PC-3 (cell line): ENCODE measurements at regions of chr14 and their contacts with region 1.

Region 1: GRCh38 chr14:88613552-88614010 is 50.7 kb downstream of the ZC3H14 start:
- DNase-seq: peak; percentile 89
- ATAC-seq: peak; percentile 83
- H3K4me3 ChIP-seq: no peak overlapping the region
- H3K27ac ChIP-seq: peak overlapping the region; percentile 65
- H3K4me1 ChIP-seq: peaks cover 39% of the 10 kb centered on the region
- H3K27me3 ChIP-seq: no peaks in the 10 kb centered on the region
- CTCF ChIP-seq: no peak

Region 2: GRCh38 chr14:88576222-88576621 is 37.4 kb before region 1 on chr14:
- CTCF ChIA-PET with region 1: no interaction called
- POLR2A ChIA-PET with region 1: no interaction called
- intact Hi-C with region 1: loop called (anchors 2 kb)
- DNase-seq: peak; percentile 52
- ATAC-seq: peak; percentile 92
- H3K4me3 ChIP-seq: no peak overlapping the region
- H3K27ac ChIP-seq: peak overlapping the region; percentile 51
- H3K4me1 ChIP-seq: peaks cover 8% of the 10 kb centered on the region; the same call in 1 of the 2 replicates
- H3K27me3 ChIP-seq: no peaks in the 10 kb centered on the region
- CTCF ChIP-seq: no peak

Region 3: GRCh38 chr14:88841741-88842140 is 228.2 kb after region 1 on chr14:
- CTCF ChIA-PET with region 1: no interaction called
- POLR2A ChIA-PET with region 1: no interaction called
- intact Hi-C with region 1: no loop called
- DNase-seq: no peak
- ATAC-seq: no peak
- H3K4me3 ChIP-seq: no peak overlapping the region
- H3K27ac ChIP-seq: no peak overlapping the region
- H3K4me1 ChIP-seq: no peaks in the 10 kb centered on the region
- H3K27me3 ChIP-seq: no peaks in the 10 kb centered on the region
- CTCF ChIP-seq: no peak

Region 4: GRCh38 chr14:88868558-88869159 is 255.1 kb after region 1 on chr14:
- CTCF ChIA-PET with region 1: no interaction called
- POLR2A ChIA-PET with region 1: no interaction called
- intact Hi-C with region 1: no loop called
- DNase-seq: peak; percentile 56
- ATAC-seq: peak; percentile 83
- H3K4me3 ChIP-seq: no peak overlapping the region
- H3K27ac ChIP-seq: no peak overlapping the region
- H3K4me1 ChIP-seq: no peaks in the 10 kb centered on the region
- H3K27me3 ChIP-seq: no peaks in the 10 kb centered on the region
- CTCF ChIP-seq: peak; percentile 67